ENCODE measurements at regions of chr19 and their contacts with region 1.

Region 1: DNA sequence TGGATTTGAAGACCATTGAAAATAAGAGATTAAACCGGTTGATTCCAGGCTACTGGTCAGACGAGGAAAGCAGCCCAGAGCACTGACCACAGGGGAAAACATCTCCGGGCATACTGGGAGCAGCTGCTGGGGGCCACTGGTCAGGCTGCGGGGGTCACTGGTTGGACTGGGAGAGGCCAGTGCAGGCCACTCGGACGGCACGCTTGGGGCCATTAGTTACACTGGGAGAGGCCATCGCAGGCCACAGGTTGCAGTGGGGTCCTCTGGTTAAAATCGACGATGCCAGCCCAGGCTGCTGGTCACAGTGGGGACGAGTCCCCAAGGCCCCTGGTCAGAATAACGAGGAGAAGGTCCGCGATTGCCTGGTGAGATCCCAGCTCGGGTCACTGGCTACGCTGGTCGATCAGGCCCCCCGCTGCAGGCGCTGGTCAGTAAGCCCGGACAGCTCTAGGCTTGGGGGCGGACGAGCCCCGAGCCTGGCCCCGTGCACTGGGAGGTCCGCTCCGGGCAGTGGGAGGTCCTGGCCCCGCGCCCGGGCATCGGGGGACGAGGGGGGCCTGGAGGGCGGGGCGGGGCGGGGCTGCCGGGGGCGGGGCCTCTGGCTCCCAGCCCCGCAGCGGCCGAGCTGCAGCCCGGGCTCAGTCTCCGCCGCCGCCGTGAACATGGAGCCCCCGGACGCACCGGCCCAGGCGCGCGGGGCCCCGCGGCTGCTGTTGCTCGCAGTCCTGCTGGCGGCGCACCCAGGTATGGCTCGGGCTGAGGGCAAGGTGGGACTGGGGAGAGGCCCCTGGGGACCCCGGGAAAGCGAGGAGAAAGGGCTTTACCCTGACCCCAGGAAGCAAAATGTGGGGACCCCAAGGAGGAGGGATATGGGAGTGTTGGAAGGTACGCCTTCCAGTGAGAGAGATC is at the start of gene BCAM:
- DNase-seq: peak in 1 of 2 experiments; percentile 87
- H3K4me3 ChIP-seq: peak within 1 kb of the TSS; percentile 64 to 96 (median 70)
- H3K27ac ChIP-seq: peak within 1 kb of the TSS; percentile 91
- H3K4me1 ChIP-seq: peaks cover 4 to 34% (median 21%) of the 10 kb centered on the region in 4 experiments
- H3K27me3 ChIP-seq: peaks cover 0 to 13% (median 11%) of the 10 kb centered on the region in 4 experiments; a peak in 6 of 7 replicates
- CTCF ChIP-seq: no peak
- EP300 ChIP-seq: no peak
- POLR2A ChIP-seq: peak in 1 of 2 experiments; percentile 50; a peak in 2 of 3 replicates
- RAD21 ChIP-seq: no peak
- total RNA-seq, gene BCAM: 81.4 and 83.0 TPM in 2 replicates

Region 2: GRCh38 chr19:44732615-44733014 is 76.1 kb before region 1 on chr19:
- CTCF ChIA-PET with region 1: interaction called, 23 read pairs
- POLR2A ChIA-PET with region 1: interaction called, 6 read pairs
- DNase-seq: no peak
- H3K4me3 ChIP-seq: no peak overlapping the region
- H3K27ac ChIP-seq: no peak overlapping the region
- H3K4me1 ChIP-seq: no peaks in the 10 kb centered on the region; a peak in 1 of 7 replicates
- H3K27me3 ChIP-seq: no peaks in the 10 kb centered on the region
- CTCF ChIP-seq: no peak
- EP300 ChIP-seq: no peak
- POLR2A ChIP-seq: no peak
- RAD21 ChIP-seq: no peak

Region 3: DNA sequence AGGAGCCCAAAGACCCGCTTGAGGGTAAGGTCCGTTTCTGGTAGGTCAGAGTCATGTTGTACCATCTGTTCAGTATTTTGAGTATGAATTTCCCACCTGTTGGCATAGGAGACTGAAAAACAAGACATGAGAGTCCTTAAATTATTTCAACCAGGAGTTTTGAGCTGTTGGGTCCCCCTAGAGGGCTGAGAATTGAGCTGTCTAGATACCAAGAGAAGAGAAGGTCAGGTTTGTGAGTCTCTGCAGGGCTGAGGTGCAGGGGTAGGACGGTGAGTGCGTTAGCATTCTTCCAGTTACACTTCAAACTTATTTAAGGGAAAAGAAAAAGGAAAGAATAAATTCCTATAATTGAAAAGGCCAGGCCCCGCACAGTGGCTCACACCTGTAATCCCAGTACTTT is 26.0 kb before region 1 on chr19:
- CTCF ChIA-PET with region 1: interaction called, 116 read pairs
- POLR2A ChIA-PET with region 1: interaction called, 7 read pairs
- DNase-seq: no peak
- H3K4me3 ChIP-seq: no peak overlapping the region
- H3K27ac ChIP-seq: no peak overlapping the region
- H3K4me1 ChIP-seq: no peaks in the 10 kb centered on the region
- H3K27me3 ChIP-seq: no peaks in the 10 kb centered on the region
- CTCF ChIP-seq: no peak
- EP300 ChIP-seq: no peak
- POLR2A ChIP-seq: no peak
- RAD21 ChIP-seq: 0 out of 4 replicates have a peak, but pooled peaks of 1 of the 2 experiments have one; percentile 5

Region 4: GRCh38 chr19:44792281-44792680 is 16.4 kb before region 1 on chr19:
- CTCF ChIA-PET with region 1: interaction called, 116 read pairs
- POLR2A ChIA-PET with region 1: interaction called, 30 read pairs
- DNase-seq: no peak
- H3K4me3 ChIP-seq: no peak overlapping the region
- H3K27ac ChIP-seq: no peak overlapping the region
- H3K4me1 ChIP-seq: peaks cover 2 to 5% (median 4%) of the 10 kb centered on the region in 4 experiments; a peak in 5 of 7 replicates
- H3K27me3 ChIP-seq: no peaks in the 10 kb centered on the region
- CTCF ChIP-seq: no peak
- EP300 ChIP-seq: no peak
- POLR2A ChIP-seq: no peak
- RAD21 ChIP-seq: no peak

Region 5: GRCh38 chr19:44820648-44821609 is 12.2 kb after region 1 on chr19:
- CTCF ChIA-PET with region 1: interaction called, 10 read pairs
- POLR2A ChIA-PET with region 1: interaction called, 37 read pairs
- DNase-seq: no peak
- H3K4me3 ChIP-seq: no peak overlapping the region
- H3K27ac ChIP-seq: no peak overlapping the region
- H3K4me1 ChIP-seq: 0 out of 7 replicates have a peak, but pooled peaks cover 0 to 3% (median 0%) of the 10 kb centered on the region in 4 experiments
- H3K27me3 ChIP-seq: peaks cover 0 to 10% (median 5%) of the 10 kb centered on the region in 4 experiments; a peak in 4 of 7 replicates
- CTCF ChIP-seq: no peak
- EP300 ChIP-seq: no peak
- POLR2A ChIP-seq: no peak
- RAD21 ChIP-seq: no peak

Region 6: GRCh38 chr19:44939668-44940067 is 131.0 kb after region 1 on chr19:
- CTCF ChIA-PET with region 1: no interaction called
- POLR2A ChIA-PET with region 1: no interaction called
- DNase-seq: no peak
- H3K4me3 ChIP-seq: no peak overlapping the region
- H3K27ac ChIP-seq: no peak overlapping the region
- H3K4me1 ChIP-seq: no peaks in the 10 kb centered on the region
- H3K27me3 ChIP-seq: no peaks in the 10 kb centered on the region
- CTCF ChIP-seq: no peak
- EP300 ChIP-seq: no peak
- POLR2A ChIP-seq: no peak
- RAD21 ChIP-seq: no peak

Region 7: GRCh38 chr19:44987148-44987675 is 178.5 kb after region 1 on chr19:
- CTCF ChIA-PET with region 1: no interaction called
- POLR2A ChIA-PET with region 1: no interaction called
- DNase-seq: no peak
- H3K4me3 ChIP-seq: no peak overlapping the region
- H3K27ac ChIP-seq: no peak overlapping the region
- H3K4me1 ChIP-seq: no peaks in the 10 kb centered on the region
- H3K27me3 ChIP-seq: no peaks in the 10 kb centered on the region
- CTCF ChIP-seq: no peak
- EP300 ChIP-seq: no peak
- POLR2A ChIP-seq: no peak
- RAD21 ChIP-seq: no peak

Measured in H1 (cell line).